Right ventricle myocardium inferior (tissue), 1 donor: ENCODE measurements at regions of chr20 and their contacts with region 1.

Region 1: GRCh38 chr20:32336918-32337347 is 21.2 kb upstream of the ASXL1 start:
- DNase-seq: no peak
- ATAC-seq: no peak

Region 2: GRCh38 chr20:32207626-32208498 is 129.1 kb before region 1 on chr20 and contains the starts of genes PLAGL2 and POFUT1:
- intact Hi-C with region 1: loop called (anchors 5 kb)
- DNase-seq: peak; percentile 96
- ATAC-seq: peak; percentile 98
- total RNA-seq, gene PLAGL2: 6.0 TPM
- total RNA-seq, gene POFUT1: 24.5 TPM

Region 3: GRCh38 chr20:32231847-32232246 is 105.1 kb before region 1 on chr20:
- intact Hi-C with region 1: no loop called
- DNase-seq: no peak
- ATAC-seq: no peak

Region 4: GRCh38 chr20:32263398-32263954 is 73.5 kb before region 1 on chr20:
- intact Hi-C with region 1: no loop called
- DNase-seq: no peak
- ATAC-seq: no peak

Region 5: GRCh38 chr20:32285621-32286371 is 51.1 kb before region 1 on chr20:
- intact Hi-C with region 1: loop called (anchors 5 kb)
- DNase-seq: no peak
- ATAC-seq: peak; percentile 39

Region 6: GRCh38 chr20:32357869-32358631 is 21.1 kb after region 1 on chr20 and contains the start of gene ASXL1:
- intact Hi-C with region 1: loop called (anchors 2 kb)
- DNase-seq: peak; percentile 99
- ATAC-seq: peak; percentile 97
- total RNA-seq, gene ASXL1: 23.1 TPM

Region 7: DNA sequence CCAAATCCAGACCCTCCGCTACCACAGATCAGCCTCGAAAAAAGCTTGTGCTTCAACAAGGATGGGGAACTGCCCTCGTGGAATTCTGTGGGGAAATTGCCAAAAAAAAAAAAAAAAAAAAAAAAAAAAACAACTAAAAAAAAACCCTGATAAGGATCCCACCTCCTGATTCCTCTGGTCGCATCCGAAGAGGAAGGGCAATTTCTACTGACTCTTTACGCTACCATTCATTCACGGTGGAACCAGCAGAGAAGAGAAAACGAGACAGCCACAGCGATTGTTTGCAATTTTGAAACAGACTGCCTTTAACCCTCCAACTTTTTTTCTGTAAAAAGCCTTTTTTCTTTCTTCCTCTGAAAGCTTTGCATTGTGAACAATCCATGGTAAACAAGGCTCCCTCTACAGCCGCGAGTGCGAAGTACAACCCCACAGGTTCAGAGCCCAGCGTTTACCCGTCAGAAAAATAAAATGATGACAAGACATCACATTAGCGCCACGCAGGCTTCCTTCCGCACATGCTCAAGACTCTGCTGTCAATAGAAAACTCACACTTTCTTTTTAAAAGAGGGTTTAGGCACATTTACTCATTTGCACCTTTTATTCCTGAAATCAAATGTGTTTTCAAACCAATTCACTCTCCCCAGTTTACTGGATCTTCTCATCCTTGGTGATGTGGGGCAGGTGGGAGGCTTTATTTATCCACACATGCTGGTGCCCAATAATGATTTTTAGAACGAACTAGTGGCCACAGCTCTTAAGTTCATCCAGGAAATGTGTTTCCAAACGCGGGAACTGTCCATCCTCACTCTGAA is 148.2 kb after region 1 on chr20:
- intact Hi-C with region 1: loop called (anchors 5 kb)
- DNase-seq: no peak
- ATAC-seq: peak; percentile 70